ENCODE measurements at regions of chr1 and their contacts with region 1.

Region 1: GRCh38 chr1:175525222-175525621 is 218.2 kb downstream of the TNR start:
- DNase-seq: no peak
- H3K4me3 ChIP-seq: no peak overlapping the region
- CTCF ChIP-seq: no peak

Region 2: DNA sequence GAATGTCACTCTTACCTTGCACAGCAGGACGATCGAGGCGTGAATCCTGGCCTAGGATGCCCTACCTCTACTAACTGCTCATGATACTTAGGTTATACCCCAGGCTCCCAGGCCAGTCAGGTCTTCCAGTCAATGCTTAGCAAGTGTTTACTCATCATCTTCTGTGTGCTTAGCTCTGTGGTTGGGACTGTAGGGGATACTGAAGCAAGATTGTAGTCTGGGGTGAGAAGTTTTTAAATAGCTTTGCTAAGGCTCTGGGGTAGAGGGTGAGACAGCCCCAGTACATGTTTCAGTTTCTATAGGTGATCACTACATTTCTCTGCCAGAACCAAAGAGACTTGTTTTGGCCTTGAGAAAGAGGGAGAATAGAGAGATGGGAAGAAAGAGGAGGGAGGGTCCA is 81.9 kb before region 1 on chr1:
- in situ Hi-C with region 1: no loop called
- DNase-seq: no peak
- H3K4me3 ChIP-seq: no peak overlapping the region
- CTCF ChIP-seq: no peak

Region 3: DNA sequence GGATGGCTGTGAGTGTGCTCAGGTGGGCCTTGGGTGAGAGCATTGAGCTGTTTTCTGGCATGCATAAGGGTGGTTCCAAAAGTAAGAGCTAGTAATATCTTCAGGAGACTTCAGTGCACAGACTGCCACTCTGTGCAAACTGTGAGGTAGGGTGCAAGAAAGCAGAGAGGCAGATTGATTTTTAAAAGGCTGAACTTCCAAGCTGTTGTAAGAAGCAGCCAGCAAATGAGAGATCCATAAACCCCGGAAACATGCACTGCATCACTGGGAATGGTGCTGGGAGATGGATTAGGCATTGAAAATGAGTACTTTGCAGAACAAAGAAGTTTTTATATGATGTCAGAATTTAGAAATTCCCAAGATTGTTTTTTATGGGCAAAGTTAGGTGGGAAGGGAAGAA is 37.3 kb before region 1 on chr1:
- in situ Hi-C with region 1: no loop called
- DNase-seq: no peak
- H3K4me3 ChIP-seq: no peak overlapping the region
- CTCF ChIP-seq: no peak

Region 4: DNA sequence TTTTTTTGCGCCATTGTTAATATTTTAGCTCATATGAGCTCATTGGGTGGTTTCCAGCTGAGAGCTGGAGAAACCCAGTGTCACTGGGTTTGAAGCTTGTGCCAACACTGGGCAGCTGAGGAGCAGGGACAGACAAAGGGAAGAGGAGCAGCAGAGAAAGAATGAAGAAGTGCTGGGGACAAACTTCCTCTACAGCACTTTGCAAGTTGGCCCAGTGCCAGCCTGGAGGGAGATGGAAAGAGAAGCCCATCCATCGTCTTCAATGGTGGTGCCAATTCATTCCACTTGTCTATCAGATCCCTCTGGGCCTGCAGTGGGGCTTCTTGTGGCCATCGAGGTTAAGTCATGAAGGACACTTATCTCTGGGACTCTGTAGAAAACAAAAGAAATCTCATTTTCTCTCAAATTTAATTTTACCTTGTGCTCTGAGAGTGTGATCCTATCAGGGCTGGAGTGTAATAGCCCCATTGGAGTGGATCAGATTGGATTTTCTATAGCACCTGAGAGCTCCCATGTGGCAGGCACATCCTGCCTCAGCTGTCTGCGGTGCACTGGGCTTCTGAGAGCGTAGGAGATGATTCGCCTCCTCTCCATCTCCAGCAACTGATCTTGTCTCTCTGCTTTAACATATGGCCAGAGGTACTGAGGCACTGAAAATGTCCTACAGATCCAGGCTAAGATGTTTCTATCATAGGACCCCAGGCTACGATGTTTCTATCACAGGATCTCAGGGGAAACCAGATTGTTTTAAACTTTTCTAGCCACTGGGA is 103.5 kb after region 1 on chr1:
- in situ Hi-C with region 1: loop called (anchors 5 kb)
- DNase-seq: no peak
- H3K4me3 ChIP-seq: no peak overlapping the region
- CTCF ChIP-seq: no peak